ENCODE measurements at regions of chr11 and their contacts with region 1.

Region 1: GRCh38 chr11:114821621-114822412 is 143.5 kb downstream of the NXPE2 start:
- DNase-seq: no peak
- ATAC-seq: no peak
- H3K4me3 ChIP-seq: no peak overlapping the region
- H3K27ac ChIP-seq: no peak overlapping the region
- H3K4me1 ChIP-seq: no peaks in the 10 kb centered on the region
- H3K27me3 ChIP-seq: no peaks in the 10 kb centered on the region

Region 2: DNA sequence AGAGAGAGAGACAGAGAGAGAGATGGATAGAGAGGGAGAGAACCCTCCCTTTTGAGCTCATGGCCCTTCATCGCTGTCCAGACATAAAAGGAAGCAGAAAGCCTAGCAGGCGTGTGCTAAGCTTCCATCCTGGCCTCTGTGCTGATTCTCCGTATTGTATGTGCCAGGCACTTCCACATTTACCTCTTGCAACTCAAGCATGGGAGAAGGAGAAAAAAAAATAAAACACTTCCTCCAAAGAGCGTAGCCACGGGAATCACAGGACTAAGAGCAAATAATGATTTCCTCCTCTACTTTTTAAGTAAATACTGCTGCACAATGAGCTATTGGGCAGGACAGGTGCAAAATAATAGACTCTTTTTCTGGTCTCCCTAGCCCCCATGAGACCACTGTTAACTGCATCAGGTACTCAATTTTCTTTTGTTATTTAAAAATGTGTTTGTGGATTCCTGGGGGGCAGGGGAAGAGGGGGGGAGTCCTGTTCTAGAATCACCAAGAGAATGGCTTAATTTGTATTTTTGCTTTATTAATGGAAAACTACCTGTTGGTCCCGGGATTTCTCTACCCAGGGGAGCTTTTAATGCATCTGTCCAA is 10.8 kb after region 1 on chr11:
- intact Hi-C with region 1: loop called in 1 of 2 experiments (anchors 1 kb)
- DNase-seq: no peak
- ATAC-seq: no peak
- H3K4me3 ChIP-seq: no peak overlapping the region
- H3K27ac ChIP-seq: no peak overlapping the region
- H3K4me1 ChIP-seq: peaks cover 0 to 2% of the 10 kb centered on the region in 2 donors
- H3K27me3 ChIP-seq: no peaks in the 10 kb centered on the region